ENCODE measurements at regions of chr11 and their contacts with region 1.

Region 1: DNA sequence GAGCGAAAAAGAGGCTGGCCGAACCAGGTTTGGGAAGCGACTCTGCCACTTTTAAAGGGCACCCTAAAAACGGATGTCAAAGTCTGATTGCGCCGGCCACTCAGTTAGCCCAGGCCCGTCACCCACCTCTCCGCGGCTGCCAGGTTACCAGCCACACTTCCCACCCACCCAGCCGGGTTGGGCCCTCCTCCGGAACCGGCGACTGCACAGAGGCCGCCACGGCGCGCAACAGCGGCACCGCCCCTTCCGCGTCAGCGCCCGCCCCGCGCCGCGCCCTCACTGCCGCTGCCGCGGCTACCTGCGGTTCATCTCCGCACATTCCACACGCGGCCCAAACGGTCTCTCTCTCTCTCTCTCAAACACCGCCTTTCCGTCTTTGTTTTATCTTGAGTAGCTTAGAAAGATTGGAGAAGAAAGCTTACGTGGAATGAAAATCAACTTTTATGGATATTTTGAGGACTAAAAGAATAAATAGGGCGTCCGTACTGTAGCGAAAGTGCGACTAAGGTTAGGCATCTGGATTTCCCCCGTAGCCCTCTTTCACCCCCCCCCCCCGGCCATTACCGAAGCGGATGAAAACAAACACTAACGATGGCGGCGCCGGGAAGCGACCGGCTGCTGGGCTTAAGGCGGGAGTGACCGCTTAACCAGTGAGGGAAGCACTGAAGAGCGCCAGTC is at the starts of genes ATG13 and HARBI1:
- DNase-seq: peak; percentile 55
- ATAC-seq: peak; percentile 98
- H3K4me3 ChIP-seq: peak within 1 kb of the TSS; percentile 82
- H3K27ac ChIP-seq: peak within 1 kb of the TSS; percentile 99
- H3K4me1 ChIP-seq: peaks cover 7% of the 10 kb centered on the region; the same call in 1 of the 2 replicates
- H3K27me3 ChIP-seq: no peaks in the 10 kb centered on the region
- CTCF ChIP-seq: no peak
- EP300 ChIP-seq: peak in 1 of 2 experiments; percentile 100; a peak in 2 of 4 replicates
- POLR2A ChIP-seq: peak; percentile 85
- RAD21 ChIP-seq: no peak
- polyA plus RNA-seq, gene ATG13: 10.9 to 13.6 TPM
- polyA plus RNA-seq, gene HARBI1: 5.1 to 7.5 TPM

Region 2: GRCh38 chr11:46361283-46362155 is 255.6 kb before region 1 on chr11:
- CTCF ChIA-PET with region 1: interaction called, 12 read pairs
- POLR2A ChIA-PET with region 1: no interaction called
- RAD21 ChIA-PET with region 1: no interaction called
- SMC1A ChIA-PET with region 1: interaction called, 3 read pairs
- in situ Hi-C with region 1: no loop called
- intact Hi-C with region 1: no loop called
- DNase-seq: peak; percentile 44
- ATAC-seq: peak; percentile 97
- H3K4me3 ChIP-seq: peak overlapping the region; percentile 65
- H3K27ac ChIP-seq: peak overlapping the region; percentile 90
- H3K4me1 ChIP-seq: peaks cover 20% of the 10 kb centered on the region
- H3K27me3 ChIP-seq: no peaks in the 10 kb centered on the region
- CTCF ChIP-seq: no peak
- EP300 ChIP-seq: peak; percentile 33 to 43; a peak in 2 of 4 replicates
- POLR2A ChIP-seq: peak; percentile 94
- RAD21 ChIP-seq: no peak

Region 3: DNA sequence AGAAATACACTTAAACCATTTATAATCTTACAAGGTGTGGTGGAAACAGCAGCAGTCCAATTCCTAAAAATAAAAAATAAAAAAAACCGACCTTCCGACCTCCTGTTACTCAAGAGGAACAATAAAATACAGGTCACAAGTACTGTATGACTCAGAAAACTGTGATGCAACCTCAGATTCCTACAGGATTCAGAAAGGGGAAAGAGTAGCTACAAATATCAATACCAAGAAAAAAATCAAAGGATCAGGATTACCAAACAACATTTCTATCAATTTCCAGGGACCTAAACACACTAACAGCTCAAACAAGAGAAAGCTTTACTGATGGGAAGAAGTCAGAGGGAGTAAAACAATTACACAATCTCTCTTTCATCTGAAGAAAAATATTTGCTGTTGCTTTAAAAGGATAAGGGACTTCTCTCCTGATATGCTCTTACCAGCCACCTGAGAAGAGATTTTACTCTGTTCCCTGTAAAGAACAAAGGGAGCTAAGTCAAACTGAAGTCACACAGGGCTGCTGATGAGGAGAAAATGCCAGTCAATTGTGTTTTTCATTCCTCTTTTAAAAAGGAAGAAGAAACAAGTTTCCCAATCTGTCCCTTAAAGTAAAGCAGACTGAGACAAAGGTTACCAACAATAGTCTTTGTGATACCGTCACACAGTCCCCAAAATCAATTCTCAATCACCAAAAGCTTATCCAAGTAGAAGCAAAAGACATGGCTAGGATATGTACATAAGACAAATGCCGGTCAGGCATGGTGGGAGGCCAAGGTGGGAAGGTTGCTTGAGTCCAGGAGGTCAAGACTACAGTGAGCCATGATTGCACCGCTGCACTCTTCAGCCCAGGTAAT is 62.7 kb before region 1 on chr11:
- CTCF ChIA-PET with region 1: interaction called, 29 read pairs
- POLR2A ChIA-PET with region 1: interaction called, 11 read pairs
- RAD21 ChIA-PET with region 1: interaction called, 18 read pairs
- SMC1A ChIA-PET with region 1: interaction called, 34 read pairs
- in situ Hi-C with region 1: no loop called
- intact Hi-C with region 1: loop called (anchors 2 kb)
- DNase-seq: no peak
- ATAC-seq: peak; percentile 21
- H3K4me3 ChIP-seq: no peak overlapping the region
- H3K27ac ChIP-seq: peak overlapping the region; percentile 52
- H3K4me1 ChIP-seq: peaks cover 23% of the 10 kb centered on the region
- H3K27me3 ChIP-seq: no peaks in the 10 kb centered on the region
- CTCF ChIP-seq: no peak
- EP300 ChIP-seq: no peak
- POLR2A ChIP-seq: no peak
- RAD21 ChIP-seq: no peak

Region 4: DNA sequence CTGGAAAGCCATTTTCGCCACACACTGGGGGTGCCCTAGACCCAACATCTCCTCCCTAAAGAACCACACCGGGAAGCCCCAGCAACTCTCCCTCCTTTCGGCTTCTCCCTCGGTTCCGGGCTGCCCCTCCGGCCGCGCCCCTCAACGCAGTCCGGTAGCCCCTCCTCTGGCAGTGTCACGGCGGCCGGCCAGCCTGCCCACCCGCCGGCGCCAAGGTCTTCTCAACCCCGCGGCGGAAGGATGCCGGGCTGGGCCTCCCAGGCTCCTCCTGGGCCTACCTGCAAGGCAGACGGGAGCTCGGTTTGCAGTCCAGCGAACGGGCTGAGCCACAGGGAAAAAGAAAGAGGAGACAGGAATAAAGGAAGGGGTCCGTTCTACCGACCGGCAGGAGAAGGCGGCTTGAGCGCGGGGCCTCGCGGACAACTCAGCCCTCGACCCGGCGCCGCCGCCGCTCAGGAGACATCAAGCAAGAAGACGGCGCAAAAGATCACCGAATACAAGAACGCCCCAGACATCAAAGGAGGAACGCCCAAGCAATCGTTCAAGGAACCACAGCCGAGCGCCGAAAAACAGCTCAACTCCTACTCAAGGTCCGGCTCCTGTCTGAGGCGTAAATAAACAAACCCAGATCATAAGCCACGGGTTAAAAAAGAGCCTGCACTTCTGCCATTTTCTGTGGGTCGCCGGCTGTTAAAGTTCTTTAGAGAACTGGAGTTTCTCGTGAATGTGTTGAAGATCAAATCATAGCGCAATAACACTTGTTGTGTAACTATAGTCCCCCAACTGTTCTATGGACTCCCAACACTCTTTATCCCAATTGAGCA is 23.4 kb before region 1 on chr11 and contains the start of gene AMBRA1:
- CTCF ChIA-PET with region 1: interaction called, 14 read pairs
- POLR2A ChIA-PET with region 1: interaction called, 6 read pairs
- RAD21 ChIA-PET with region 1: interaction called, 10 read pairs
- SMC1A ChIA-PET with region 1: interaction called, 6 read pairs
- in situ Hi-C with region 1: no loop called
- intact Hi-C with region 1: no loop called
- DNase-seq: peak; percentile 90
- ATAC-seq: peak; percentile 90
- H3K4me3 ChIP-seq: peak within 1 kb of the TSS; percentile 92
- H3K27ac ChIP-seq: peak within 1 kb of the TSS; percentile 61
- H3K4me1 ChIP-seq: no peaks in the 10 kb centered on the region
- H3K27me3 ChIP-seq: no peaks in the 10 kb centered on the region
- CTCF ChIP-seq: no peak
- EP300 ChIP-seq: no peak; a peak in 1 of 4 replicates
- POLR2A ChIP-seq: peak; percentile 85
- RAD21 ChIP-seq: no peak
- polyA plus RNA-seq, gene AMBRA1: 0.57 to 0.58 TPM

Region 5: GRCh38 chr11:46755962-46756361 is 138.8 kb after region 1 on chr11:
- CTCF ChIA-PET with region 1: no interaction called
- POLR2A ChIA-PET with region 1: no interaction called
- RAD21 ChIA-PET with region 1: no interaction called
- SMC1A ChIA-PET with region 1: no interaction called
- in situ Hi-C with region 1: no loop called
- intact Hi-C with region 1: no loop called
- DNase-seq: no peak
- ATAC-seq: no peak
- H3K4me3 ChIP-seq: no peak overlapping the region
- H3K27ac ChIP-seq: no peak overlapping the region
- H3K4me1 ChIP-seq: no peaks in the 10 kb centered on the region
- H3K27me3 ChIP-seq: no peaks in the 10 kb centered on the region
- CTCF ChIP-seq: no peak
- EP300 ChIP-seq: no peak
- POLR2A ChIP-seq: no peak
- RAD21 ChIP-seq: no peak

Region 6: GRCh38 chr11:47020793-47021526 is 403.8 kb after region 1 on chr11:
- CTCF ChIA-PET with region 1: no interaction called
- POLR2A ChIA-PET with region 1: no interaction called
- RAD21 ChIA-PET with region 1: no interaction called
- SMC1A ChIA-PET with region 1: no interaction called
- in situ Hi-C with region 1: no loop called
- intact Hi-C with region 1: no loop called
- DNase-seq: peak; percentile 42
- ATAC-seq: peak; percentile 66
- H3K4me3 ChIP-seq: no peak overlapping the region
- H3K27ac ChIP-seq: no peak overlapping the region
- H3K4me1 ChIP-seq: peaks cover 14% of the 10 kb centered on the region
- H3K27me3 ChIP-seq: no peaks in the 10 kb centered on the region
- CTCF ChIP-seq: no peak
- EP300 ChIP-seq: no peak; a peak in 1 of 4 replicates
- POLR2A ChIP-seq: no peak
- RAD21 ChIP-seq: no peak

Measured in GM12878 (cell line).